ENCODE measurements at regions of chr10 and their contacts with region 1.

Region 1: GRCh38 chr10:105797234-105797890 is 1156.3 kb downstream of the SORCS3 start:
- DNase-seq: peak; percentile 81
- H3K4me3 ChIP-seq: no peak overlapping the region
- H3K27ac ChIP-seq: no peak overlapping the region
- H3K4me1 ChIP-seq: peaks cover 42% of the 10 kb centered on the region
- H3K27me3 ChIP-seq: no peaks in the 10 kb centered on the region
- CTCF ChIP-seq: peak; percentile 86

Region 2: GRCh38 chr10:105605918-105606317 is 191.4 kb before region 1 on chr10:
- CTCF ChIA-PET with region 1: no interaction called
- POLR2A ChIA-PET with region 1: no interaction called
- intact Hi-C with region 1: no loop called
- DNase-seq: peak; percentile 30
- H3K4me3 ChIP-seq: no peak overlapping the region
- H3K27ac ChIP-seq: no peak overlapping the region
- H3K4me1 ChIP-seq: peaks cover 3% of the 10 kb centered on the region
- H3K27me3 ChIP-seq: no peaks in the 10 kb centered on the region
- CTCF ChIP-seq: no peak

Region 3: GRCh38 chr10:105950410-105950809 is 153.0 kb after region 1 on chr10:
- CTCF ChIA-PET with region 1: no interaction called
- POLR2A ChIA-PET with region 1: no interaction called
- intact Hi-C with region 1: loop called (anchors 5 kb)
- DNase-seq: peak; percentile 81
- H3K4me3 ChIP-seq: no peak overlapping the region
- H3K27ac ChIP-seq: no peak overlapping the region
- H3K4me1 ChIP-seq: peaks cover 24% of the 10 kb centered on the region
- H3K27me3 ChIP-seq: no peaks in the 10 kb centered on the region
- CTCF ChIP-seq: peak; percentile 90

Region 4: DNA sequence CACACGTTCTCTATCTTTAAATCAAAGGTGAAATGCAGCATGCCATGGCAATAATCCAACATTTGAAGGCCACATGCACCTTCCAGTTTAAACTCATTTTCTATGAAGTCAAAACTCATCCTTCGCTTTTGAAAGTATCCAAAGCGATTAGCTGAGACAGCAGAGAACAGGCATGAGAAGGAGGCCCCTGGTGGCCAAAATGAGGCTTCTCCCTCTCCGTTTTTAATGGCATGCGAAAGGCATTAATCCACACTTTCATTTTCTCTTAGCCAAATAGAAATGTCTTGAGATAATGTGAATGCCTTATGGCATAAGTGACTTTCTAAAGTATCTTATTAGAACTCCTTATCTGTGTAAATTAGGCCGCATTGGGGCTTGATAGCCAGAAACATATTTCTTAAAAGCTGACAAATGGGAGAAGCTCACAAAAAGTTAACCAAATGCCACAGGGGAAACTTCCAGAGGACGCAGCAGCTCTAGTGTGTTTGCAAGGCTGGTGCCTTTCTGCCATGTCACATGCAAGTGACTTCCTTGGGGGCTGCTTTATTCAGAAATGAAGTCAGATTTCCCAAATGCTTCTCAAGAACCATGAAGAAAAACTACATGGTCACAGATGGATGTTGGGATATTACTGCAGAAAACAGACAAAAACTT is 177.6 kb after region 1 on chr10:
- CTCF ChIA-PET with region 1: no interaction called
- POLR2A ChIA-PET with region 1: no interaction called
- intact Hi-C with region 1: loop called (anchors 5 kb)
- DNase-seq: peak; percentile 84
- H3K4me3 ChIP-seq: peak overlapping the region; percentile 29
- H3K27ac ChIP-seq: no peak overlapping the region
- H3K4me1 ChIP-seq: peaks cover 38% of the 10 kb centered on the region
- H3K27me3 ChIP-seq: no peaks in the 10 kb centered on the region
- CTCF ChIP-seq: peak; percentile 91

Region 5: GRCh38 chr10:106175760-106176377 is 378.5 kb after region 1 on chr10:
- CTCF ChIA-PET with region 1: no interaction called
- POLR2A ChIA-PET with region 1: no interaction called
- intact Hi-C with region 1: loop called (anchors 2 kb)
- DNase-seq: peak; percentile 47
- H3K4me3 ChIP-seq: no peak overlapping the region
- H3K27ac ChIP-seq: no peak overlapping the region
- H3K4me1 ChIP-seq: no peaks in the 10 kb centered on the region
- H3K27me3 ChIP-seq: no peaks in the 10 kb centered on the region
- CTCF ChIP-seq: peak; percentile 75